MCF 10A (cell line): ENCODE measurements at regions of chr4 and their contacts with region 1.

Region 1: GRCh38 chr4:103786014-103786413 is 66.2 kb upstream of the TACR3 start:
- DNase-seq: peak; percentile 64
- H3K4me3 Mint-ChIP-seq: no peak overlapping the region
- H3K27ac Mint-ChIP-seq: no peak overlapping the region
- H3K4me1 Mint-ChIP-seq: no peaks in the 10 kb centered on the region
- H3K27me3 Mint-ChIP-seq: no peaks in the 10 kb centered on the region
- CTCF ChIP-seq: peak; percentile 58

Region 2: DNA sequence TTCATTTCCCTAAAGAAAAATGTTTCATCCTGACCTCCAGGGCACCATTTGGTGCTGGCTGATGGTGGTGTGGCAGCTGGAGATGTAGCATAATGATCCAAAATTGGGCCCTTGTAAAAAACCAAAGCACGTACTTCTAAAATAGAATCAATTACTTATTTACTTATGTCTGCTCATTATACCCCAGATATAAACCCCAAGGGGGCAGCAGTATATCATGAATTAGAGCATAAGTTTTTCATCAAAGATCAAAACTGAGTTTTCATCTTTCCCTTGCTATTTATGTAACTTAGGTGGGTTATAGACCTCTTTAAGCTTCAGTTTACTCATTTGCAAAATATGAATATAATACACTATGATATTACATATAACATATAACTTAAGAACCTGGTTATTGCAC is 307.3 kb before region 1 on chr4:
- CTCF ChIA-PET with region 1: interaction called, 4 read pairs
- POLR2A ChIA-PET with region 1: no interaction called
- intact Hi-C with region 1: loop called (anchors 1 kb)
- DNase-seq: peak; percentile 33
- H3K4me3 Mint-ChIP-seq: no peak overlapping the region
- H3K27ac Mint-ChIP-seq: no peak overlapping the region
- H3K4me1 Mint-ChIP-seq: no peaks in the 10 kb centered on the region
- H3K27me3 Mint-ChIP-seq: no peaks in the 10 kb centered on the region
- CTCF ChIP-seq: no peak

Region 3: GRCh38 chr4:103634236-103634635 is 151.8 kb before region 1 on chr4:
- CTCF ChIA-PET with region 1: interaction called, 42 read pairs
- POLR2A ChIA-PET with region 1: no interaction called
- intact Hi-C with region 1: loop called (anchors 1 kb)
- DNase-seq: peak; percentile 25
- H3K4me3 Mint-ChIP-seq: no peak overlapping the region
- H3K27ac Mint-ChIP-seq: no peak overlapping the region
- H3K4me1 Mint-ChIP-seq: no peaks in the 10 kb centered on the region
- H3K27me3 Mint-ChIP-seq: no peaks in the 10 kb centered on the region
- CTCF ChIP-seq: peak; percentile 22

Region 4: GRCh38 chr4:103842637-103843239 is 56.7 kb after region 1 on chr4:
- CTCF ChIA-PET with region 1: no interaction called
- POLR2A ChIA-PET with region 1: no interaction called
- intact Hi-C with region 1: no loop called
- DNase-seq: no peak
- H3K4me3 Mint-ChIP-seq: no peak overlapping the region
- H3K27ac Mint-ChIP-seq: no peak overlapping the region
- H3K4me1 Mint-ChIP-seq: no peaks in the 10 kb centered on the region
- H3K27me3 Mint-ChIP-seq: no peaks in the 10 kb centered on the region
- CTCF ChIP-seq: no peak

Region 5: DNA sequence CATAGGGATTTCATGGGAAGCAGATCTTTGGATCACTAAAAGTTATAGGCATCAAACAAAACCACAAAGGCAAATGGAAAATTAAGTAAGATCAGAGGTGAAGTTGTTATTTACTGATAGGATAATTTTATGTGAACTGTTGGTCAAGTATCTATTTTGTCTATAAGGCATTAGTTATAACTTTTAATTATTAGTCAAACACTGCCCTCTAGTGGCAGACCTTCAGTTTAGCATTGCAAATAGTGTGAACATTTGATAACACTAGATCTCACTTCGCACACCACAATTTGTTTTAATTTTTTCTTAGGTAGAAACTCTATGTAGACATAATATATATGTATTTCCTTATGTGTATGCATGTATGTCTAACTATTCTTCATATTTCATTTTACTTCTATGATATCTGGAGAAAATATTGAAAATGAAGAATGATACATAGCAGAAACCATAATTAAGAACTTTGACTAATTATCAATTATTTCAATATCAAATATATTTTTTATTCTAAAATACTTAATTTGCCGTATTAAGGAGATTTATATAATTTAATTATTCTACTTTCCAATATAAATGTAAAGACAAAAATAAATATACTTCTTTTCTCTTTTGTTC is 148.3 kb after region 1 on chr4:
- CTCF ChIA-PET with region 1: no interaction called
- POLR2A ChIA-PET with region 1: no interaction called
- intact Hi-C with region 1: loop called (anchors 5 kb)
- DNase-seq: peak; percentile 67
- H3K4me3 Mint-ChIP-seq: no peak overlapping the region
- H3K27ac Mint-ChIP-seq: no peak overlapping the region
- H3K4me1 Mint-ChIP-seq: no peaks in the 10 kb centered on the region
- H3K27me3 Mint-ChIP-seq: no peaks in the 10 kb centered on the region
- CTCF ChIP-seq: peak; percentile 73

Region 6: DNA sequence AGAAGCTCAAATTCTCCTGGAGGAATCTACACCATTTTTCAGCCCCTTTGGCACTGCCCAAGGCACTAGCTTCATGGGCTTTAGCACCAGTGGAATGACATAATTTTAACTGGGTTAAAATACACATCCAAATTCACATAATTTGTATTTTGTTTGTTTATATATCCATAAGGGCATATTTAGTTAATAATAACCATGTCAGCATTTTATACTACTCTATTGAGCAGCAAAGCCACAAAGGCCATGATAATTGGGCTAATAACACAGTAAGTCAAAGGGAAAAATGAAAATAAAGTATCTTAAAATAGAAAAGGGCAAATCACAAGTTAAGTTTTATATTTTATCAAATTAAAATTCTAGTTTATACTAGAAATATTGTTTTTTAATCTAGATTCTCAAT is 196.4 kb after region 1 on chr4:
- CTCF ChIA-PET with region 1: no interaction called
- POLR2A ChIA-PET with region 1: no interaction called
- intact Hi-C with region 1: no loop called
- DNase-seq: no peak
- H3K4me3 Mint-ChIP-seq: no peak overlapping the region
- H3K27ac Mint-ChIP-seq: no peak overlapping the region
- H3K4me1 Mint-ChIP-seq: peaks cover 8% of the 10 kb centered on the region
- H3K27me3 Mint-ChIP-seq: no peaks in the 10 kb centered on the region
- CTCF ChIP-seq: no peak